ENCODE measurements at regions of chr3 and their contacts with region 1.

Region 1: GRCh38 chr3:98602078-98602678 is 8.8 kb upstream of the CPOX start:
- DNase-seq: no peak
- H3K4me3 ChIP-seq: no peak overlapping the region
- H3K27ac ChIP-seq: no peak overlapping the region
- H3K4me1 ChIP-seq: no peaks in the 10 kb centered on the region
- H3K27me3 ChIP-seq: peaks cover 0 to 1% (median 0%) of the 10 kb centered on the region in 4 experiments; a peak in 1 of 7 replicates
- CTCF ChIP-seq: peak in 2 of 3 experiments; percentile 76 to 78; a peak in 3 of 4 replicates
- EP300 ChIP-seq: no peak
- POLR2A ChIP-seq: no peak
- RAD21 ChIP-seq: peak; percentile 91 to 96

Region 2: GRCh38 chr3:98589331-98590036 is 12.7 kb before region 1 on chr3:
- CTCF ChIA-PET with region 1: interaction called, 12 read pairs
- POLR2A ChIA-PET with region 1: interaction called, 6 read pairs
- DNase-seq: no peak
- H3K4me3 ChIP-seq: no peak overlapping the region
- H3K27ac ChIP-seq: no peak overlapping the region
- H3K4me1 ChIP-seq: peaks cover 2 to 10% (median 3%) of the 10 kb centered on the region in 4 experiments; a peak in 4 of 7 replicates
- H3K27me3 ChIP-seq: no peaks in the 10 kb centered on the region; a peak in 1 of 7 replicates
- CTCF ChIP-seq: no peak
- EP300 ChIP-seq: no peak
- POLR2A ChIP-seq: no peak
- RAD21 ChIP-seq: no peak

Region 3: GRCh38 chr3:98623572-98624280 is 21.5 kb after region 1 on chr3:
- CTCF ChIA-PET with region 1: interaction called, 12 read pairs
- POLR2A ChIA-PET with region 1: no interaction called
- DNase-seq: no peak
- H3K4me3 ChIP-seq: peak overlapping the region in 1 of 4 experiments; percentile 9; a peak in 1 of 8 replicates
- H3K27ac ChIP-seq: no peak overlapping the region
- H3K4me1 ChIP-seq: peaks cover 0 to 14% (median 7%) of the 10 kb centered on the region in 4 experiments; a peak in 2 of 7 replicates
- H3K27me3 ChIP-seq: no peaks in the 10 kb centered on the region
- CTCF ChIP-seq: no peak
- EP300 ChIP-seq: no peak
- POLR2A ChIP-seq: no peak
- RAD21 ChIP-seq: no peak

Region 4: GRCh38 chr3:98657457-98657856 is 55.3 kb after region 1 on chr3:
- CTCF ChIA-PET with region 1: interaction called, 53 read pairs
- POLR2A ChIA-PET with region 1: no interaction called
- DNase-seq: peak; percentile 21 to 72
- H3K4me3 ChIP-seq: peak overlapping the region in 3 of 4 experiments; percentile 24 to 34 (median 29); a peak in 3 of 8 replicates
- H3K27ac ChIP-seq: no peak overlapping the region
- H3K4me1 ChIP-seq: no peaks in the 10 kb centered on the region
- H3K27me3 ChIP-seq: no peaks in the 10 kb centered on the region; a peak in 2 of 7 replicates
- CTCF ChIP-seq: peak; percentile 75 to 89 (median 88)
- EP300 ChIP-seq: no peak
- POLR2A ChIP-seq: no peak
- RAD21 ChIP-seq: peak; percentile 74 to 85

Region 5: DNA sequence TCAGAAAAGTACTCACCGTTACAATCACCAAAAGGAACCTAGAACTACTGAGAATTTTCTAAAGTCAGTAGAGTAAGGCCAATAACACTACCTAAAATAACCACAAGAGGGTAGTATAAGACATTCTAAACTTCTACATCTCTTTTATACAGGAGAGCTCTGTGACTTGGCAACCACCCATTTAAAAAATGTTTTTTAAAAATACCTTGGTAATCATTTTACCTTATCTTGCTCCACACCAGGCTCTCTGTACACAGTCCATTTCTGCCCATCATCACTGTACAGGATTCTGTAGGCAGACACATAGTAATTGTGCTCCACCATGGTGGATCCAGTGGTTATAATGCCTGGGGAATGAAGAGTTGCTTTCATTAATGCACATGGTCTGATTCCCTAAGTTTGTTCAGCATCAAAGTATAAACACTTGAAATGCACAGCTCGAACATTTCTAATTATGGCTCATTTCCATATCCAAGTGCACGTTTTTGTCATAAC is 215.4 kb after region 1 on chr3:
- CTCF ChIA-PET with region 1: interaction called, 74 read pairs
- POLR2A ChIA-PET with region 1: interaction called, 3 read pairs
- DNase-seq: no peak
- H3K4me3 ChIP-seq: no peak overlapping the region
- H3K27ac ChIP-seq: no peak overlapping the region
- H3K4me1 ChIP-seq: no peaks in the 10 kb centered on the region; a peak in 1 of 7 replicates
- H3K27me3 ChIP-seq: no peaks in the 10 kb centered on the region
- CTCF ChIP-seq: peak in 2 of 3 experiments; percentile 22 to 60; a peak in 2 of 4 replicates
- EP300 ChIP-seq: no peak
- POLR2A ChIP-seq: no peak
- RAD21 ChIP-seq: peak; percentile 64

Measured in H1 (cell line).